Brain microvascular endothelial cell (primary cell): ENCODE measurements at regions of chr2 and their contacts with region 1.

Region 1: GRCh38 chr2:74690571-74690970 is 36.5 kb downstream of the SEMA4F start:
- DNase-seq: peak; percentile 52
- H3K4me3 ChIP-seq: no peak overlapping the region
- H3K27ac ChIP-seq: no peak overlapping the region
- H3K27me3 ChIP-seq: no peaks in the 10 kb centered on the region
- CTCF ChIP-seq: peak; percentile 81

Region 2: GRCh38 chr2:74553892-74554645 is 136.5 kb before region 1 on chr2 and contains the start of gene LOXL3:
- in situ Hi-C with region 1: no loop called
- DNase-seq: peak; percentile 80
- H3K4me3 ChIP-seq: peak within 1 kb of the TSS; percentile 90
- H3K27ac ChIP-seq: peak within 1 kb of the TSS; percentile 90
- H3K27me3 ChIP-seq: no peaks in the 10 kb centered on the region
- CTCF ChIP-seq: no peak

Region 3: GRCh38 chr2:74864846-74865722 is 174.5 kb after region 1 on chr2:
- in situ Hi-C with region 1: loop called (anchors 25 kb)
- DNase-seq: peak; percentile 55
- H3K4me3 ChIP-seq: no peak overlapping the region
- H3K27ac ChIP-seq: no peak overlapping the region
- H3K27me3 ChIP-seq: no peaks in the 10 kb centered on the region
- CTCF ChIP-seq: peak; percentile 43

Region 4: DNA sequence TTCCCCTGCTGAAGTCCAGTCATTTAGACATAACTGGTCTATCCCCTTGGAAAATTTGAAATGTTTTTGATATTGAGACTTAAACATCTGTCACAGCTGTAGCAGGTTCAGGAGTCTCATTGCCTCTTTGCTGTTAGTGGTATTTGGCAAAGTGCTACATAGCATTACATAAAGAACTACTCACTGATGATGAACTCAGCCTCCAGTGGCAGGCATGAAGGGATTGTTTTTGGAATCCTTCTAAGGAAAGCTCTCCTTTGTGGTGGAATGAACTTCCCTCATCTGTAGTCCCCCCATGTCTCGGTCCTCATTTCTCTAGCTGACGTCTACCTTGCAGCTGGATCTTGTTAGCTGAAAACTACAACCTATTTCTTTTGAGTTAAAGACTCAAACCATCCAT is 397.2 kb after region 1 on chr2:
- in situ Hi-C with region 1: no loop called
- DNase-seq: no peak
- H3K4me3 ChIP-seq: no peak overlapping the region
- H3K27ac ChIP-seq: no peak overlapping the region
- H3K27me3 ChIP-seq: no peaks in the 10 kb centered on the region
- CTCF ChIP-seq: no peak